ENCODE measurements at regions of chr1 and their contacts with region 1.

Region 1: GRCh38 chr1:15848957-15849774 is 1.7 kb downstream of the SPEN start:
- DNase-seq: peak; percentile 87 to 89
- H3K4me3 ChIP-seq: peak overlapping the region; percentile 93 to 98
- H3K27ac ChIP-seq: peak overlapping the region; percentile 99
- H3K4me1 ChIP-seq: peaks cover 0 to 71% (median 43%) of the 10 kb centered on the region in 4 donors
- H3K27me3 ChIP-seq: no peaks in the 10 kb centered on the region
- CTCF ChIP-seq: no peak

Region 2: DNA sequence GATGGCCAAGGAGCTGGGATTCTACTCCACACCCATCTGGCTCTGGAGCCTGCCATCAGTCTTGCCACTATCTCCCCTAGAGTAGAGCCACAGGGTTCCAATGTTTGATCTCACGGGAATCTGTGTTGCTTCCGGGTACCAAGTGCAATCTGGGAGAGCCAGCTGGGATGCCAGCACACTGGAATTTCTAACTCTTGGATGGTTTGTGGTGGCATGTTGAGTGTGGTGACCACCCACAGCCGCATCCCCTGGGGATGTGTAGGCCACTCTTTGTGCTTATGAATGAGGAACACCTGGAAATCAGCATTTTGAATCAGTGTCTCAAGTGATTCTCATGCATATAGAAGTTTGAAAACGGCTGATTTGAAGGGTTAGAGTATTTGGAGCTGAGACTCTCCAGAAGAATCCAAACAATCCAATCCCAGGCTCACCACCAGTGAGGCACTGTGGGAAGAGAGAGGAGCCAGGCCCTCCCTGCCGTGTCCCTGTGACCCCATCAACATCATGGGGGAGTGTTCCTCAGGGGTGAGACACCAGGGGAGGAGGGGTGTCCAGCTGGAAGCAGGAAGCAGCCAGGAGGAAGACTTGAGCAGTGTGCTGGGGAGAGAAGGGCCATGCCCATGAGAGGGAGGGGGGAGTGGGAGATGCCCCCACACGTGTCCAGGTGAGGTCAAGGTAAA is 77.2 kb before region 1 on chr1:
- intact Hi-C with region 1: no loop called
- DNase-seq: no peak
- H3K4me3 ChIP-seq: no peak overlapping the region
- H3K27ac ChIP-seq: peak overlapping the region; percentile 5 to 97
- H3K4me1 ChIP-seq: peaks cover 0 to 25% (median 0%) of the 10 kb centered on the region in 4 donors
- H3K27me3 ChIP-seq: no peaks in the 10 kb centered on the region
- CTCF ChIP-seq: no peak

Region 3: GRCh38 chr1:15885701-15886610 is 36.8 kb after region 1 on chr1:
- intact Hi-C with region 1: loop called (anchors 2 kb)
- DNase-seq: peak; percentile 99 to 100
- H3K4me3 ChIP-seq: peak overlapping the region; percentile 30 to 45
- H3K27ac ChIP-seq: peak overlapping the region; percentile 81 to 90
- H3K4me1 ChIP-seq: peaks cover 0 to 95% (median 64%) of the 10 kb centered on the region in 4 donors
- H3K27me3 ChIP-seq: no peaks in the 10 kb centered on the region
- CTCF ChIP-seq: peak in 1 of 2 experiments; percentile 23